Activated T-helper 1 cell treated with anti-CD3 and anti-CD28 coated beads, Interleukin-12 subunit alpha, Interleukin-12 subunit beta, Interleukin-2, Interleukin-4 antibody, amounts not matched to agents 30 ng/mL and 10 ng/mL and 1 ng/mL, durations not matched to agents 14 hours and 24 hours and 36 hours (primary cell): ENCODE measurements at regions of chr4 and their contacts with region 1.

Region 1: GRCh38 chr4:38266616-38267015 is 306.4 kb downstream of the PTTG2 start:
- DNase-seq: no peak
- H3K4me3 Mint-ChIP-seq: no peak overlapping the region
- H3K27ac Mint-ChIP-seq: no peak overlapping the region
- H3K4me1 Mint-ChIP-seq: no peaks in the 10 kb centered on the region
- H3K27me3 Mint-ChIP-seq: peaks cover 5% of the 10 kb centered on the region

Region 2: DNA sequence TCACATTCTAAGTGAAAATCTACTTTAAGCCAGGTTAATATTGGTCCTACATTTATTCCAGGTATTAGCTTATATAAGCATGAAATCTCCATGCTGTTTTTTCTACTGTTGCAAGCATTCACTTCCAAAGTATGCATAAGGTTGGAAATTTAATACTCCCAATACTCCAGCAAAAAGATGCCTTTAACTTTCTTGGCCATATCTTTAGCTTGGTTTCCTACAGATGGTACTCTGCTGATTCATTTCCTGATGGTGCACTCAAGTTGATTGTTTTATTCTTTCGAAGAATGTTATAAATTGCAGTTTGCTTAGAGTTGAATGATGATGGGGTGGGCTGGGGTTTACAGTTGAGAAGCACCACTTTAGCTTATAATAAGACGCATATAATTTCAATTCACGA is 23.8 kb after region 1 on chr4:
- intact Hi-C with region 1: loop called (anchors 1 kb)
- DNase-seq: no peak
- H3K4me3 Mint-ChIP-seq: no peak overlapping the region
- H3K27ac Mint-ChIP-seq: no peak overlapping the region
- H3K4me1 Mint-ChIP-seq: no peaks in the 10 kb centered on the region
- H3K27me3 Mint-ChIP-seq: peaks cover 17% of the 10 kb centered on the region